ENCODE measurements at regions of chr1 and their contacts with region 1.

Region 1: DNA sequence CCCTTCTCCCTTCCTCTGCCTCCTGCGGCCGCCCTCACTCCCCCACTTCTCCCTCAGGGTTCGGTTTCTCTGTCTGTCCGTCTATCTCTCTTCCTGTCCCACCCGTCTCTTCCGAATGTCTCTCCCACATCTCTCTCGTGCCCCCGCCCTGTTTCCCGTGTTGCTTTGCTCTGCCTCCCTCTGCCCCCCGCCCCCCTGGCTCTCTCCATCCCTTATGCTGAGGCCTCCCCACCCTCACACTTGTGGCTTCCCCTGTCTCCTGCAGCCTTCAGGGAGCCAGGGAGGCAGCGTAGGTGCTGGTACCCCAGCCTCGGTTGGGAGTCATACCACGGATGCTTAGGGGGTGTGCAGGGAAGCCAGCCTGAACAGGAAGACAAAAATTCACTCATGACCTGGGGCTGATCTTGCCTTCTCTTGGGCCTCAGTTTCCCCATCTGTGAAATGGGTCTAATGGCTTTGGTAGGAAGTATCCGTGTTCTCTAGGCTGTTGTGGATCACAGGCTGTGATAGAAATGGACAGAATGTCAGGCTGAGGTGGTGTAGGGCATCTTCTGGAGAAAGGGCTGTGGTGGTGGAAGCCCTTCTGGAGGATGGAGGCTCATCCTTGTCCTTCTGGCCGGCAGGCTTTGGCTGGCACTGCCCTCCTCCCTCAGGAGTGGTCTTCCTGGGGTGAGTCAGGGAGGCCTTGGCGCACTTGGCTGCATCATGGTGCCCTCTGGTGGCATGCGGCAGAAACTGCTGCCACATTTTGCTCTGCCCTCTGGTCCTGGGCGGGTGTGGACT is 55.5 kb downstream of the FOXO6 start:
- DNase-seq: peak; percentile 50
- H3K4me3 ChIP-seq: no peak overlapping the region
- H3K27ac ChIP-seq: no peak overlapping the region
- H3K4me1 ChIP-seq: peaks cover 31% of the 10 kb centered on the region
- H3K27me3 ChIP-seq: no peaks in the 10 kb centered on the region
- CTCF ChIP-seq: peak; percentile 88 to 95

Region 2: GRCh38 chr1:39745016-39745670 is 1671.6 kb before region 1 on chr1:
- CTCF ChIA-PET with region 1: no interaction called
- dilution Hi-C with region 1: no loop called
- in situ Hi-C with region 1: no loop called
- intact Hi-C with region 1: no loop called
- DNase-seq: no peak
- H3K4me3 ChIP-seq: no peak overlapping the region
- H3K27ac ChIP-seq: no peak overlapping the region
- H3K4me1 ChIP-seq: peaks cover 11% of the 10 kb centered on the region
- H3K27me3 ChIP-seq: no peaks in the 10 kb centered on the region
- CTCF ChIP-seq: no peak

Region 3: DNA sequence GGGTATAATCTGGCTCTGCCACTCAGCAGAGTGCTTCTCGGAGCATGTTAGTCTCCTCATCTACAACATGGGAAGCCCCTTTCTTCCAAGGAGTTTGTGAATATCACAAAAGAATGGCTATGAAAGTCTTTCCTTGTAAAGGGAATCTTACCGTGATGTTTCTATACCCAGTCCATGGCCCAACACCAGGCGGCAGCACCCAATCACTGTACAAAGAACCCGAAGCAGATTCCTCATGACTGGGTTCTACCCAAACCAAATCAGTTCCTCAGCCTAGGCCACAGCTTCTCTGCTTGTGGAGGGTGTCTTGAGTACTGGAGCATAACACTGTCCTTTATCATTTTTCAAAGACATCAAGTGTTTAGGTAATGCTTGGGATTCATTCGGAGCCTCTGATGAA is 378.6 kb before region 1 on chr1:
- CTCF ChIA-PET with region 1: no interaction called
- dilution Hi-C with region 1: no loop called
- in situ Hi-C with region 1: no loop called
- intact Hi-C with region 1: loop called (anchors 5 kb)
- DNase-seq: no peak
- H3K4me3 ChIP-seq: no peak overlapping the region
- H3K27ac ChIP-seq: no peak overlapping the region
- H3K4me1 ChIP-seq: no peaks in the 10 kb centered on the region
- H3K27me3 ChIP-seq: no peaks in the 10 kb centered on the region
- CTCF ChIP-seq: peak; percentile 8 to 33

Region 4: DNA sequence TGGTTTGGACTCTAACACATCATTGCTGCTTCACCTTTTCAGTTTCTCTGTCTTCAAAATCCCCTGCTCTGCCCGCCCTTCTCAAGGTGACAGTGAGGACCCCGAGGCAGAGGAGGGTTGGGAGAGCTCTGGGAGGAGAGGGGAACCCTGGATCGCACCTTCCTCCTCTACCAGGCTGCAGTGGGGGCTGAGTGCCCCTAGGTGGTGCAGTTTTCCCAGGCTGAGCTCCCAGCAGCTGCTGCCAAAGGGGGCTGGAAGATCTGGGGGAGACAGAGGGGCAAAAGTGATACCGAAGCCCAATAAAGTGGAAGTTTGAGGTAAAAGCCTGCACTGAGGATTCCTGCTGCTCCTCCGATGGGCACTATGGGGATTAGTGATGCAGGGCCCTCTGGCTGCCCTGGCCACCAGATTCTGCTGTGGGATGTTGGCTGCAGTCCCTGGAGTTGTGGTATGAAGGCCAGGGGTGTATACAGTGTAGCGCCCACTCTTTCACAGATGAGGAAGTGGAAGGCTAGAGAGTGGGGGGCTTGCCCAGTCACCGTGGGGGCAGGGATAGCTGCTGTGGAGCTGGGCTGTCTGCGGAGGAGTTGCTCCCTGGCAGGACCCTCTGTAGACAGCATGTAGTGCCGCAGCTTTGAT is 133.9 kb before region 1 on chr1:
- CTCF ChIA-PET with region 1: interaction called, 6 read pairs
- dilution Hi-C with region 1: loop called (anchors 25 kb)
- in situ Hi-C with region 1: loop called in 1 of 2 experiments (anchors 25 kb)
- intact Hi-C with region 1: loop called (anchors 1 kb)
- DNase-seq: peak; percentile 9
- H3K4me3 ChIP-seq: no peak overlapping the region
- H3K27ac ChIP-seq: no peak overlapping the region
- H3K4me1 ChIP-seq: no peaks in the 10 kb centered on the region
- H3K27me3 ChIP-seq: no peaks in the 10 kb centered on the region
- CTCF ChIP-seq: peak; percentile 76 to 96

Region 5: DNA sequence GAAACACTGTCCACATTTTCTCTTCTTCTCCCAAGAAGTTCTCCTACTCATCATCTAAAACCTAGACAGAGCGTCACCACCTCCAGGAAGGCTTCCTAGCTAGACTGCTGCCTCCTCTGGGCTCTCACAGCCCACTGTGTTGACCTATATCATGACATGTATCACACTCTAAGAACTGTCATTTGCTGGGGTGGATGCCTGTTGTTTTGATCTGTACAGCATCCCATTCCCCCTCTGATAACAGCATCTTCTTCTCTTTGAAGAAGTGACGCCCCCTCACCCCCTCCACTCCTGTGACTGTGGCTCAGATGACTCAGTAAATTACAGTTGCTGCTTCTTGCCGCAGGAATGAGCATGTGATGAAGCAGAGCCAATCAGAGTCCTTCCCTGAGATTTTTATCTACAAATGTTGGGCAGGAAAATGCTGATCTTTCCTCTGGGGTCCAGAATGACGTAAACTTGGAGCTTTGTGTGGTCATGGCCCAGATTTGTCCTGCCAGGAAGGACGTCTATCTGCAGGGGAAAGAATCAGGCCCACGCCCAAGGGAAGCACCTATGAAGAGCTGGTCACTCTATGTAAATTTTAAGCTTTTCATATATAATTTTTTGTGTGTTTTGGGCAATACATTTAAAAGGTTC is 83.5 kb before region 1 on chr1:
- CTCF ChIA-PET with region 1: no interaction called
- dilution Hi-C with region 1: loop called (anchors 5 kb)
- in situ Hi-C with region 1: no loop called
- intact Hi-C with region 1: no loop called
- DNase-seq: peak; percentile 73
- H3K4me3 ChIP-seq: no peak overlapping the region
- H3K27ac ChIP-seq: no peak overlapping the region
- H3K4me1 ChIP-seq: no peaks in the 10 kb centered on the region
- H3K27me3 ChIP-seq: peaks cover 2% of the 10 kb centered on the region
- CTCF ChIP-seq: no peak

Region 6: GRCh38 chr1:41381692-41382477 is 34.9 kb before region 1 on chr1:
- CTCF ChIA-PET with region 1: no interaction called
- dilution Hi-C with region 1: no loop called
- in situ Hi-C with region 1: no loop called
- intact Hi-C with region 1: loop called (anchors 2 kb)
- DNase-seq: no peak
- H3K4me3 ChIP-seq: peak overlapping the region in 2 of 3 experiments; percentile 14 to 43
- H3K27ac ChIP-seq: no peak overlapping the region
- H3K4me1 ChIP-seq: peaks cover 8% of the 10 kb centered on the region
- H3K27me3 ChIP-seq: no peaks in the 10 kb centered on the region
- CTCF ChIP-seq: no peak

Region 7: DNA sequence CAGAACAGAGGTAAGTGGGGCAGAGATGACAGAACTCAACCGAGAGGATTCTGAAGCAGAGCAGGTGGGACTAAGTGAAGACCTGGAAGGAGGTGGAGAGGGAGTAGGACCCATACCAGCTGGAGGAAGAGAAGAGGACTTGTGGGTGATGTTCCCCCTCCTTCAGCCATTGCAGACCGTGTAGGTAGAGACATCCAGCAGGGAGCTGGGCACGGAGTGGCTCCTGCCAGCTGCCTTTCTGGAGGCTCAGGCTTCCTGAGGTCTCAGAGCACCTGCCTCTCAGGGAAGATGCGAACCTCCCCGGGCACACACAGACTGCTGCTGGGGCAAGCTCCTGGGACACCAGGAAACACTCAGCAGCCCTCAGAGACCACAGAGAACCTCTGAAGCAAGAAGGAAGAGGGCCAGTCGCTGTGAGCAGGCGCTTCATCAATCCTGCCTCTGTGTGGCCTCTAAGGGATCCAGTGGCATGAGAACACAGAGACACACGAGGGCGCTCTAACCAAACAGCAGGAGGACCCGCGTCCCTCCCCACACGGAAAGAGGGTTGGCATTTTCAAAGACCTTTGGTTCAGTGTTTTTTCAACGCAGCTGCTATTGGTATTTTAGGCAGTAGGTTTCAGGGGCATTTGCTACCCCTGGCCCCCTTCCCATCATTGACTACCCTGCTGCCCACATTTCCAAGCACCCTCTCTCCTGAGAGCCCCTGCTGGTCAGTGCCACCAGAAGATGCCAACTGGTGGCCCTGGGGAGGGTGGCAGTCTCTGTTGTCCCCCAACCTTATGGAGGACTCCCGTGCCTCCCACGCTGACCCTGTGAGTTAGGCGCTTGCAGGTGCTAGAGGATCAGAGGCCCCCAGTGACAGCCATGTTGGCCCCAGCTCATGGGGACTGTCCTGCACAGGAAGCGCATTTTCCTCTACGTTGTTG is 157.3 kb after region 1 on chr1:
- CTCF ChIA-PET with region 1: no interaction called
- dilution Hi-C with region 1: no loop called
- in situ Hi-C with region 1: no loop called
- intact Hi-C with region 1: no loop called
- DNase-seq: peak; percentile 57
- H3K4me3 ChIP-seq: no peak overlapping the region
- H3K27ac ChIP-seq: no peak overlapping the region
- H3K4me1 ChIP-seq: no peaks in the 10 kb centered on the region
- H3K27me3 ChIP-seq: no peaks in the 10 kb centered on the region
- CTCF ChIP-seq: peak; percentile 91 to 98

Measured in mammary epithelial cell (primary cell).